Activated CD8-positive, alpha-beta T cell treated with anti-CD3 and anti-CD28 coated beads, Interleukin-2, amount 10 ng/mL, durations not matched to agents 7 days and 5 days (primary cell): ENCODE measurements at regions of chr10 and their contacts with region 1.

Region 1: DNA sequence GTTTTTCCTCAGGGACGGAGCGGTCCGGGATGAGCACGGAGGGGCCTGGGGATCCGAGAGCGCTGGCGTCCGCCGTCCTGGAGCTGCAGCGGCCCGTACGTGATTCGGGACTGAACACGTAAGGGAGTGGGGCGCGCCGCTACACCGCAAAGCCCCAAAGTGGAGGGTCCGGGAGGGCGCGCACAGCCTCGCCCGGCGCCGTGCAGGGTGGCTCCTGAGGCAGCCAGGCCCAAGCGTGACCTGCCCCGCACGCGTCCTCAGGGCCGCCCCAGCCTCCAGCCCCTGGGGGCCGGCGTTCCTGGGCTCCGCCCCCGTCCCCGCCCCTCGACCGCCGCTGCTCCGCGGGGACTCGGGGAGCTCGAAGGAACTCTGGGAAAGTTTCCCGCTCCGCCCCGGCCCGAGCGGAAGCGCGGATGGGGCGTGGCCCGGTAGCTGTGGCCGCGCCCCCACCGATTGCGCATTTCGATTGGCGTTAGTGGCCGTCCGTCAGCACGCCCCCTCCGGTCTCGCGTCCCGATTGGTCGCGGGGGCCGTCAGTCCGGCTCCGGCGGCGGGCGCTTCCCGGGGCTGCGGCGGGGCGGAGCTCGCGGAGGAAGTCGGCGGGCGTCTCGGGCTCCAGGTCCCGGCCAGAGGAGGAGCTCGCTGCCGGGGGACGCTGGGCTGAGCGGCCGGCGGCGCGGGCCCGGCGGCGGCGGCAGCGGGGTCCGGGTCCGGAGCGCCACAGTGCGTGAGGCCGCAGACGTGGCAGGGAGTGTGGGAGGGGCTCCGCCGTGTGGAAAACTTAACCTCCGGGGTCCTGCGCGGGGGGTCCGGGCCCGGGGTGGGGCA is at the starts of genes ANKRD16 and FBH1:
- DNase-seq: peak; percentile 97
- ATAC-seq: peak; percentile 87
- H3K4me3 Mint-ChIP-seq: peak within 1 kb of the TSS; percentile 83
- H3K27ac Mint-ChIP-seq: peak within 1 kb of the TSS; percentile 75
- H3K4me1 Mint-ChIP-seq: peaks cover 42% of the 10 kb centered on the region
- H3K27me3 Mint-ChIP-seq: no peaks in the 10 kb centered on the region
- total RNA-seq, gene ANKRD16: 5.2 to 5.7 TPM
- total RNA-seq, gene FBH1: 62.6 to 64.4 TPM

Region 2: GRCh38 chr10:5813287-5814109 is 76.3 kb before region 1 on chr10 and contains the start of gene GDI2:
- CTCF ChIA-PET with region 1: interaction called, 4 read pairs
- POLR2A ChIA-PET with region 1: interaction called, 14 read pairs
- DNase-seq: peak; percentile 97
- ATAC-seq: peak; percentile 92
- H3K4me3 Mint-ChIP-seq: peak within 1 kb of the TSS; percentile 86
- H3K27ac Mint-ChIP-seq: peak within 1 kb of the TSS; percentile 94
- H3K4me1 Mint-ChIP-seq: peaks cover 60% of the 10 kb centered on the region
- H3K27me3 Mint-ChIP-seq: no peaks in the 10 kb centered on the region
- total RNA-seq, gene GDI2: 237 to 243 TPM

Region 3: DNA sequence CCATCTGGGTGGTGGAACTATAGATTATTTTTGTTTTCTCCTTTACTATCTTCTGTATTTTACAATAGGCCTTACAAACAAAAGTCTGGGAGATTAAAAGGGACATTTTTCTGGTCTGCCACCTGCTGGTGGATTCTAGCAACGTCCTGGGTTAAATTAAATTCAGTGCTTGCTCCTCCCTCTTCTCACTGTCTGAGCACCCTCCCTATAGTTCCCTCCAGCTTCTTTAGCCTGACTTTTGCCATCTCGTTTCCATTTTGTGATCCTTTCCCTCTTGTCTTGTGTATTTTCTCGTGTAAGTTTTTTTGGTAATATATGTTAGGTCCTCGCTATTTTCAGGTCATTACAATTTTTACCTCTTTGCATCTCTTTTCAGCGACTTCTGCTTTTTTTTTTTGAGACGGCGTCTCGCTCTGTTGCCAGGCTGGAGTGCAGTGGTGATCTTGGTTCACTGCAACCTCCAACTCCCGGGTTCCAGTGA is 16.3 kb before region 1 on chr10:
- CTCF ChIA-PET with region 1: interaction called, 15 read pairs
- POLR2A ChIA-PET with region 1: no interaction called
- DNase-seq: peak; percentile 78
- ATAC-seq: peak; percentile 94
- H3K4me3 Mint-ChIP-seq: peak overlapping the region; percentile 16
- H3K27ac Mint-ChIP-seq: no peak overlapping the region
- H3K4me1 Mint-ChIP-seq: peaks cover 6% of the 10 kb centered on the region
- H3K27me3 Mint-ChIP-seq: no peaks in the 10 kb centered on the region